GM18951 (cell line): ENCODE measurements at regions of chr6 and their contacts with region 1.

Region 1: DNA sequence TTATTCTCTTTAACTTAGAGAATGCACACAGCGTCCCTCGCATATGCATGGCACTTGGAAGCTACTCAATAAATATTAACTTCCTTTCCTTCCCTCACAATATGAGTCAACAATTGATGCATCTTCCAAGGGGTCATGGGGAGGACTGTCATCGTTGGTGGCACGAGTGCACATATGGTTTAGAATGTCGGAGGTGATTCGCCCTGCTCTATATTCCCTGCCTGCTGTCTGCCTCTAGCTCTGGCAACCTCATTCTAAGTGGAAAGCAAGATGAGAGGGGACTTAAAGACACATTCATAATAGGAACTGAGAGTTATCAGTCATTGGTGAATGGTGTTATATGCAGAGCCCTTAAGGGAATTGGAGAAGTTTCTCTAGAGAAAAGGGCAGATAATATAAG is 44.6 kb downstream of the MAK start:
- POLR2A ChIP-seq: no peak

Region 2: DNA sequence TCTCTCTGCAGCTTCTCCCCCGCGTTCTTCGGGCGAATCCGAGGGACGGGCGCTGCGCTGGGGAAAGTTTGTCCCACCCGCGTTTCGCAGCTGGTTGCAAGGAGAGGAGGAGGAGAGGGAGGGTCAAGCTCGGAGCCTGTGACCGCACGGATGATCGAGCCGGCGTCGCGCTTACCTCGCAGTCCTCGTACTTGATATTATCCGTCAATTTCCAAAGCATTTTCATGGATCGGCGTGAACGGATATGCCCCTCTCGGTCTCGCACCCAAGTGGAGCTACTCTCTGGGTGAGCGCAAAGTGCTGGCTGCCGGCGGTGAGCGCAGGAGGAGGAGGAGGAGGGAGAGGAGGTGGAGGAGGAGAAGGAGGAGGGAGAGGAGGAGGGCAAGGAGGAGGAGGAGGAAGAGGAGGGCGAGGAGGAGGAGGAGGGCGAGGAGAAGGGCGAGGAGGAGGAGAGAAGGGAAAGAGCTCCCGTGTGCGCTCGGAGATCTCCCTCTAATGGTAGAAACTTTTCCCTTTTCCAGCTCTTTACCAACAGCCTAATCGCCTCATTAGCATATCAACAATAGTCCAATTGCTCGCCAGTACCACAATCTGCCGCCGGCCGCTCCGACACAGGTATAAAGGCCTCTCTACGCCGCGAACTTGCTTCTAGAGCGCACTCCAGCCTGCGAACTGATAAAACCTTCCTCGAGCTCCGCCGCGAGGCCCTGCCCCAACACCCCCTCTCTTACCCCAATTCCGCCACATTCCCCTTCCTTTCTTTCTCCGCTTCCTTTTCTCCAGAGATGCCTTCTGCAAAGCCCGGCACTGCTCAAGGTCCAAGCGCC is 378.7 kb before region 1 on chr6 and contains the start of gene TFAP2A:
- in situ Hi-C with region 1: no loop called
- POLR2A ChIP-seq: no peak

Region 3: DNA sequence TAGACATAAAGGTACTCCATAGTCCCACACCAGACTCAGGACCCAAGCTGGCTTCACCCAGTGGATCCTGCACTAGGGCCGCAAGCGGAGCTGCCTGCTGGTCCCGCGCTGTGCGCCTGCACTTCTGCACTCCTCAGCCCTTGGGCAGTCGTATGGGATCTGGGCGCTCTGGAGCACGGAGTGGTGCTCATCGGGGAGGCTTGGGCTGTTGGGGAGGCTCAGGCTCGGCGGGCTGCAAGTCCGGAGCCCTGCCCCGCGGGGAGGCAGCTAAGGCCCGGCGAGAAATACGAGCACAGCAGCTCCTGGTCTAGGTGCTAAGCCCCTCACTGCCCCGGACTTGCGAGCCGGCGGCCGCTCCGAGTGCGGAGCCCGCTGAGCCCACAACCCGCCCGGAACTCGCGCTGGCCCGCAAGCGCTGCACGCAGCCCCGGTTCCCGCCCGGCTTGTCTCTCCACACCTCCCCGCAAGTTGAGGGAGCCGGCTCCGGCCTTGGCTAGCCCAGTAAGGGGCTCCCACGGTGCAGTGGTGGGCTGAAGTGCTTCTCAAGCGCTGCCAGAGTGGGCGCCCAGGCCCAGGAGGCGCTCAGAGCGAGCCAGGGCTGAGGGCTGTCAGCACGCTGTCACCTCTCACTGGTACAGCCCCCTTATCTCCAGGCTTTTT is 305.9 kb before region 1 on chr6:
- in situ Hi-C with region 1: loop called (anchors 10 kb)
- POLR2A ChIP-seq: no peak

Region 4: DNA sequence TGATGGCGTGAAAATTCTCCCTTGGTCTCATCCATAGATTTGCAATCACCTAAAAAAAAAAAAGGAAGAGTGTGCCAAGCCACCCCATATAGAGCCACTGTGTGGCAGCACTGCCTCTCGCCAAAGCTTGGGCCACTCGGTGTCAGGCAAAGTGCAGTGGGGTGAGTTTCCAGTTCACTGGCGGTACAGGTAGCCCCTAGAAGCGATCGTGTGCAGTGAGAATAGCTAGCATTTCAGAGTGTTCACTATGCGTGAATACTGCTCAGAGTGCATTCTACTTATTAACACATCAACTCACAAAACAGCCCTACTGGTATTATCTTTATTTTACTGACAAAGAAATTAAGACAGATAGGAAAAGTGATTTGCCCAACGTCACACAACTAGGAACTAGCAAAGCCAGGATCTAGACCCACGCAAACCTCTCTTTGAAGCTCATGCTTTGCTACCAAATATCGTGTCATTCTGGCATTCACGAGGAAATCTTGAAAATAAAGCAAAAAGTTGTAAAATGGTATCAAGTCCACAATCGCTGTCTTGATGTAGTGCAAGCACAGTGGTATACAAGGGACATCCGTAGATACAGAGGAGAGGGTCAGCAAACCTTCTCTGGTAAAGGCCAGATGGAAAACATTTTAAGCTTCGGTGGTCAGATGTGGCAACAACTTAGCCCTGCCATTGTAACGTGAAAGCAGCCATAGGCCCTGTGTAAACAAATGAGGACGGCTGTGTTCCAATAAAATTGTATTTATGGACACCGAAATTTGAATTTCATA is 282.9 kb before region 1 on chr6:
- in situ Hi-C with region 1: loop called (anchors 10 kb)
- POLR2A ChIP-seq: no peak